AG04450 (cell line): ENCODE measurements at regions of chr3 and their contacts with region 1.

Region 1: GRCh38 chr3:29864809-29865208 is 583.9 kb downstream of the RBMS3 start:
- DNase-seq: no peak
- H3K4me3 ChIP-seq: no peak overlapping the region
- H3K27ac ChIP-seq: no peak overlapping the region
- H3K27me3 ChIP-seq: no peaks in the 10 kb centered on the region
- CTCF ChIP-seq: no peak

Region 2: GRCh38 chr3:29805757-29806156 is 59.1 kb before region 1 on chr3:
- CTCF ChIA-PET with region 1: no interaction called
- POLR2A ChIA-PET with region 1: no interaction called
- DNase-seq: no peak
- H3K4me3 ChIP-seq: no peak overlapping the region
- H3K27ac ChIP-seq: no peak overlapping the region
- H3K27me3 ChIP-seq: no peaks in the 10 kb centered on the region
- CTCF ChIP-seq: no peak

Region 3: DNA sequence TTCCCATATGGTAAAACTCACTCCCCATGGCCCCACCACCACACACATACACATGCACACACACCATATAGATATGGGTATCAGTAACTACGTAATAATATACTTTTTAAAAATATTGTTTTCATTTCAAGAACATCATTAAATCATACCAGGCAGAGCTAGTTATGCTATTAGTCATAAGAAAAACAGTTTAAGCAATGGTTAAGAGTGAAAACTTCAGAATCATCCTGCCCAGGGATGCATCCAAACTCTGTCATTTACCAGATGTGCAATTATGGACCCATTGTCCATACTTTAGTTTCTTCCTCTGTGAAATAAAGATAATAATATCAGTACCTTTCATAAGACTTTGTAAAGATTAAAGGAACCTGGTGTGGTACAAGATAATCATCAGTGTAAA is 24.4 kb after region 1 on chr3:
- CTCF ChIA-PET with region 1: interaction called, 15 read pairs
- POLR2A ChIA-PET with region 1: no interaction called
- DNase-seq: no peak
- H3K4me3 ChIP-seq: no peak overlapping the region
- H3K27ac ChIP-seq: no peak overlapping the region
- H3K27me3 ChIP-seq: no peaks in the 10 kb centered on the region
- CTCF ChIP-seq: no peak

Region 4: GRCh38 chr3:30012941-30013543 is 148.2 kb after region 1 on chr3:
- CTCF ChIA-PET with region 1: no interaction called
- POLR2A ChIA-PET with region 1: no interaction called
- DNase-seq: peak; percentile 24
- H3K4me3 ChIP-seq: no peak overlapping the region
- H3K27ac ChIP-seq: no peak overlapping the region
- H3K27me3 ChIP-seq: no peaks in the 10 kb centered on the region
- CTCF ChIP-seq: peak; percentile 72